Activated naive CD4-positive, alpha-beta T cell treated with anti-CD3 and anti-CD28 coated beads, Interleukin-2, amount 10 ng/mL, durations not matched to agents 7 days and 5 days (primary cell): ENCODE measurements at regions of chr10 and their contacts with region 1.

Region 1: DNA sequence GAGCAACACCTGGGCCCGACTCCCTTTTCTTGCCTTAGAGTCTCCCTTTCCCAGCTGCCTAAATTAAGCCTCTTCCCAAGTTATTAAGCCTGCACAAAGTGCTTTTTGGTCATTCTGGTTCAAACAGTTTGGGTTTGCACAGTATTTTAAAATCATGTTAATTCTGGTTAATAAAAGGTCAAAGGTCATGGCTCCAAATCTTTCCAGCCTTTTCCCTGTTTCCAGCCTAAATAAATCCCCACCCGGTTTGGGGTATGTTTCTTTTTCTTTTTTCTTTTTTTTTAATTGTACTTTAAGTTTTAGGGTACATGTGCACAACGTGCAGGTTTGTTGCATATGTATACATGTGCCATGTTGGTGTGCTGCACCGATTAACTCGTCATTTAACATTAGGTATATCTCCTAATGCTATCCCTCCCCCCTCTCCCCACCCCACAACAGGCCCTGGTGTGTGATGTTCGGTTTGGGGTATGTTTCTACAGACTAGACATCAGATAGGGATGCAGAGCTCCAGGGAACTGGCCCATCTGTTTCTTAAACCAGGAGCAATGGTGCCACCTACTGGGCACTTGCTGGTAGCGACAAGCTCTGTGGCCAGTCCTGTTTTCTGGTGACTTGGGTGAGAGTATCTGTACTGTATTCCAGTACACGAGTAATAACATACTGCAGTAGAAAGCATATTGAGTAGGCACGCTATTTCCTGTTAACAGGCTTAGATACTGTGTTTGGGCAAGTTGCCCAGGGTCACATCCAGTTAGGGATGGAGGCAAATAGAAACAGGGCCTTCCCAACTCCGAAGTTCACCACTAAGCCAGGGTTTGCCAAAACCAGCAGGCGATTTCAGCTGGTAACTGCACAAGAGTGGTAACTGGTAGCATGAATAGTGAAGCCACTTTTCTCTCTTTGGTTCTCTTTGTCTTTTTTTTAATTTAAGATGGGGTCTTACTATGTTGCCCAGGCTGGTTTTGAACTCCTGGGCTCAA is 60.6 kb upstream of the TRIM8 start:
- DNase-seq: peak; percentile 90
- H3K4me3 Mint-ChIP-seq: no peak overlapping the region
- H3K27ac Mint-ChIP-seq: no peak overlapping the region
- H3K4me1 Mint-ChIP-seq: peaks cover 12% of the 10 kb centered on the region
- H3K27me3 Mint-ChIP-seq: no peaks in the 10 kb centered on the region

Region 2: DNA sequence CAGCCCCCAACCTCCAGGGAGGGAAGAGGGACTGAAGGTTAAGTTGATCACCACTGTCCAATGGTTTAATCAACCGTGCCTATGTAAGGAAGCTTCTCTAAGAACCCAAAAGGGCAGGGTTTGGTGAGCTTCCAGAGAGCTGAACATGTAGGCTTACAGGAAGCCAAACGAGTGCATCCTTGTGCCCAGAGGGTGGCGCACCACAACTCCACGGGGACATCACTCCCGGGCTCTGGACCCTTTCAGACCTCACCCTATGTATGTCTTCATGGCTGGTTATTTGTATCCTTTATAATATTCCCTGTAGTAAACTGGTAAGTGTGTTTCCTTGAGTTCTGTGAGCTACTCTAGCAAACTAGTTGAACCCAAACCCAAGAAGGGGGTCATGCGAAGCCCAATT is 199.7 kb before region 1 on chr10:
- CTCF ChIA-PET with region 1: interaction called, 11 read pairs
- DNase-seq: no peak
- H3K4me3 Mint-ChIP-seq: no peak overlapping the region
- H3K27ac Mint-ChIP-seq: no peak overlapping the region
- H3K4me1 Mint-ChIP-seq: no peaks in the 10 kb centered on the region
- H3K27me3 Mint-ChIP-seq: peaks cover 4% of the 10 kb centered on the region

Region 3: DNA sequence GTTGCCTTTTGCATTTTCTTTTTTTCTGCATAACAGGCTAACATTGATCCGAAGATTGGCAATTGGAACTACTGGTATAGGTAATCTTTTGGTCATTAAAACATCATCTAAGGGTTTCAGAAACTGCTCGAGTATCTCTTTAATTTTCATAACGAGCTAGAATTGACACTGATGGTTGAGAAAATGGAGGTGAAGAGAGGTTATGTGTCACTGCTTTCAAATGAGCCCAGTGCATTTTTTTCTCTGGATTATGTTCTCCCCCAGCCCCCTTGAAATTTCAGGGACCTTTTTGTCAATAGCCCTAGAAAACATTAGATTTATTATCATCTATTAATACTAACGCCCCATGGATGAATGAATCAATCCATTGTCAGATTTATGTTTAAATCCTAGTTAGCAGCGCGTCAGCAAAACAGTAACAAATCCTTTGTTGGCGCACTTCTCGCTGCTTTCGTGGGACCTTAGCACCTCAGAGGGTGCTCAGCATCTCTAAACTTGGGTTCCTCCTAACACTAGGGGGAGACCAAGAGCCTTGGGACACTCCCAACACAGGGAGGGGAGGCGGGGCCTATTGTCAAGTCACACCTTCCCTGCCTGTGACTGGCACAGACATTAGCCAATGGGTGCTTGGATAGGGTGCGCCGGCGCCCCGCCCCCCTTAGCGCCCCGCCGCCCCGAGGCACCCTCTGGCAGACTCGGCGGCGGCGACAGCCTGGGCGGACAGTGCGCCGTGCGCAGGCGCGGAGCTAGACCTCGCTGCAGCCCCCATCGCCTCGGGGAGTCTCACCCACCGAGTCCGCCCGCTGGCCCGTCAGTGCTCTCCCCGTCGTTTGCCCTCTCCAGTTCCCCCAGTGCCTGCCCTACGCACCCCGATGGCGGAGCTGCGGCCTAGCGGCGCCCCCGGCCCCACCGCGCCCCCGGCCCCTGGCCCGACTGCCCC is 80.2 kb before region 1 on chr10 and contains the start of gene SUFU:
- CTCF ChIA-PET with region 1: interaction called, 84 read pairs
- DNase-seq: peak; percentile 98
- H3K4me3 Mint-ChIP-seq: no peak within 1 kb of the TSS
- H3K27ac Mint-ChIP-seq: peak within 1 kb of the TSS; percentile 87
- H3K4me1 Mint-ChIP-seq: peaks cover 28% of the 10 kb centered on the region
- H3K27me3 Mint-ChIP-seq: no peaks in the 10 kb centered on the region

Region 4: DNA sequence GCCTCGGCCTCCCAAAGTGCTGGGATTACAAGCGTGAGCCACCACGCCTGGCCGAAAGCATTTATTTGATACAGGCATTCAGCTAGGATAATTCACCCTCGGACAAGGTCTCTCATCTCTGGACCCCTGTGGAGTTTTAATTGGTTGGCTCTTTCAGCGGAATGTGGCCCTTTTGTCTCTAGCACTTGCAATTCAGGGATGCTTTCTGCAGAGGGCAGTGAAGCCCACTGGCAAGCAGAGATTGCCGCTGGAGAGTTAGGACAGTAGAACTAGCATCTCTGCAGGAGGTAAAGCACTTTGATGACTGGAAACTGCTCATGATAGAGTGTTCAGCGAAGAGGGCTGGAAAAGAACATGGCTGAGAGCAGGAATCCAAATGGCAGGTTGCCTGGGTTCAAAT is 17.9 kb before region 1 on chr10:
- CTCF ChIA-PET with region 1: interaction called, 13 read pairs
- DNase-seq: no peak
- H3K4me3 Mint-ChIP-seq: no peak overlapping the region
- H3K27ac Mint-ChIP-seq: no peak overlapping the region
- H3K4me1 Mint-ChIP-seq: no peaks in the 10 kb centered on the region
- H3K27me3 Mint-ChIP-seq: no peaks in the 10 kb centered on the region

Region 5: DNA sequence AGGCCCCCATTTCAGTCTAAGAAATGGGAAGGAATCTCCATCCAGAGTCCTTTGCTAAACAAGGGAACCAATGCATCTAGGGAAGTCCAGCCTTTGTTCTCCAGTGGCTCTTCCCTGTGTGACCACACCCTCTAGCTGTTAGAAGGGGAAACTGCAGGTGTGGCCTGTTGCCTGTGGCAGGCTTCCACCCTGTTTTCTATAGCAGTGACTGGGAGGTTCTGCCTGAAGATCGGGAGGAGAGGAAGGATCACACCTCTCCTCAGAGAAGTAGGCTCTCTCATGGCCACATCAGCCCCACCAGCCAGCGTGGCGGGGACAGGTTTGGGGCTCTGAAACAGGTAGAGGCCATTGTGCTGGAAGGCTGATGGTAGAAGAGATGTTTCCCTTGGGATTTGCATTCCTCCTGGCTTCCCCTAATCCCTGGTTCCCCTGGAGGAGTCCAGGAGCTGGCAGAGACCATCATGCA is 12.8 kb after region 1 on chr10:
- CTCF ChIA-PET with region 1: interaction called, 13 read pairs
- DNase-seq: peak; percentile 48
- H3K4me3 Mint-ChIP-seq: no peak overlapping the region
- H3K27ac Mint-ChIP-seq: no peak overlapping the region
- H3K4me1 Mint-ChIP-seq: no peaks in the 10 kb centered on the region
- H3K27me3 Mint-ChIP-seq: no peaks in the 10 kb centered on the region